Activated B cell treated with CpG ODN at 0.5 μM for 24 hours (primary cell): ENCODE measurements at regions of chr10 and their contacts with region 1.

Region 1: DNA sequence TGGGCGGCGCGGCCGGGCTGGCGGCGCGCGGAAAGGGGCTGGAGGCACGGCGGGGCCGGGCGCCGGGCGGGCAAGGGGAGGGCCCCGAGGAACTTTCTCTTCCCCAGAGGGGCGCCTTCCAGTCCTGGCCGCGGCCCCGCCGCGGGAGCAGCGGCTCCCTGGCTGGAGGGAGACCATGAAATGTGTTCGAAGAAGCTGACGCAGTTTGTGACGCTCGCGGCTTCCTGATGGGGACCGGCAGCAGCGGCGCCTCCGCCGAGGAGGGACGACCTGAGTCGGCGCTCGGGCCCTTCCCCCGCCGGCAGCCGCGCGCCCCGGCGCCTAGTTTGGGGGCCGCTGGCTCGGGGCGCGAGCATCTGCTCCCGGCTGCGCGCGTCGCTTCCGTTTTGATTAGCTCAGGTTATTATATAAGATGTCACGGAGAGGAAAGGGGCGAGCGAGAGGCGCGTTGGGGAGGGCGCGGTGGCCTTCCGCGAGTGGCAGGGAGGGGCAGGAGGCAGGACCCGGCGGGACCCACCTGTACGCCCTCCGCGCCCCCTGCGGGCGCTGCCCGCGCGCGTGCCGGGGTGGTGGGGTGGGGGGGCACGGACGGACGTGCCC is 57.1 kb upstream of the PCGF5 start:
- DNase-seq: peak; percentile 79
- ATAC-seq: peak; percentile 51
- H3K4me3 Mint-ChIP-seq: peak overlapping the region; percentile 90
- H3K27ac Mint-ChIP-seq: peak overlapping the region; percentile 92
- H3K4me1 Mint-ChIP-seq: peaks cover 53% of the 10 kb centered on the region
- H3K27me3 Mint-ChIP-seq: no peaks in the 10 kb centered on the region
- CTCF ChIP-seq: no peak

Region 2: GRCh38 chr10:90912174-90912573 is 251.2 kb before region 1 on chr10:
- CTCF ChIA-PET with region 1: interaction called, 6 read pairs
- POLR2A ChIA-PET with region 1: interaction called, 9 read pairs
- intact Hi-C with region 1: loop called (anchors 2 kb)
- DNase-seq: no peak
- ATAC-seq: no peak
- H3K4me3 Mint-ChIP-seq: no peak overlapping the region
- H3K27ac Mint-ChIP-seq: no peak overlapping the region
- H3K4me1 Mint-ChIP-seq: peaks cover 19% of the 10 kb centered on the region
- H3K27me3 Mint-ChIP-seq: no peaks in the 10 kb centered on the region
- CTCF ChIP-seq: no peak

Region 3: DNA sequence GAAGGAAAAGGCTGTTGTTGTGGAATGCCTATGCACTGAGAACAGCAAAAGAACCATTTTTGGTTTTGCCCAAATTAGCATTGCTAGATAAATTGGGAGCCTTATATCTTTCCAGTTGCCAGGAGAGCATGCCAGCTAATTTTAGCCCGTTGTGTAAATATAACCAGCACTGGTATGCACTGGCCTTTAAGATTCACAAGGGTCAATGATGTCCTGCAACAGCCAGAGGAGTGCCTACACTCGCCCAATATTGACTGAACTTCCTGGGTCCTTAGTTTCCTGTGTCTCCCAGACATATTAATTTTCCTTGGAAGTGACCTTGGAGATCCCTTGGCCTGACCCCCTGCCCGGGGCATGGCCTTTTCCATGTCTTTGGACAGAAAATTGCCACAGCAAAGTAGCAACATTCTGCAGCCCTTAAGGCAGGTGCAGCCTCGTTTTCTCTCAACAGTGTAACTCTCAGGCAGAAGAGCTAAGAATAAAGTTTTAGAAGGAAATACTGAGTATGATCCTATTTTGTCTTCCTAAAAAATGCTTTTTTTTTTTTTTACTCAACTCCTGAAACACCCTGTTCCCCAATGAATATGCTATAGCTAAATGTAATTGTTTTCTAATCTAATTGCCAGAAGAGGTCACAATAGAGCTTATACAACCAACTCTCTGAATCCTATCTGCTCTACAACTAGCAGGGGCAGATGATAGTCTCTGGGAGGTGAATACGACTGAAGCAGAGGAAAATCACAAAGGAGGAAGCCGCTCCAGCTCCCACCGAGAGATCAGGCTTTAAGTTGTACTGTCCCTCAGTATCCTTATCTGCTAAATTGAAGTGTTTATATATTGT is 74.8 kb before region 1 on chr10:
- CTCF ChIA-PET with region 1: interaction called, 4 read pairs
- POLR2A ChIA-PET with region 1: interaction called, 12 read pairs
- intact Hi-C with region 1: loop called (anchors 2 kb)
- DNase-seq: no peak
- ATAC-seq: peak; percentile 69
- H3K4me3 Mint-ChIP-seq: no peak overlapping the region
- H3K27ac Mint-ChIP-seq: no peak overlapping the region
- H3K4me1 Mint-ChIP-seq: peaks cover 6% of the 10 kb centered on the region
- H3K27me3 Mint-ChIP-seq: no peaks in the 10 kb centered on the region
- CTCF ChIP-seq: no peak

Region 4: GRCh38 chr10:91185239-91185875 is 22.0 kb after region 1 on chr10:
- CTCF ChIA-PET with region 1: no interaction called
- POLR2A ChIA-PET with region 1: interaction called, 5 read pairs
- intact Hi-C with region 1: loop called (anchors 2 kb)
- DNase-seq: no peak
- ATAC-seq: no peak
- H3K4me3 Mint-ChIP-seq: no peak overlapping the region
- H3K27ac Mint-ChIP-seq: no peak overlapping the region
- H3K4me1 Mint-ChIP-seq: peaks cover 80% of the 10 kb centered on the region
- H3K27me3 Mint-ChIP-seq: no peaks in the 10 kb centered on the region
- CTCF ChIP-seq: no peak

Region 5: DNA sequence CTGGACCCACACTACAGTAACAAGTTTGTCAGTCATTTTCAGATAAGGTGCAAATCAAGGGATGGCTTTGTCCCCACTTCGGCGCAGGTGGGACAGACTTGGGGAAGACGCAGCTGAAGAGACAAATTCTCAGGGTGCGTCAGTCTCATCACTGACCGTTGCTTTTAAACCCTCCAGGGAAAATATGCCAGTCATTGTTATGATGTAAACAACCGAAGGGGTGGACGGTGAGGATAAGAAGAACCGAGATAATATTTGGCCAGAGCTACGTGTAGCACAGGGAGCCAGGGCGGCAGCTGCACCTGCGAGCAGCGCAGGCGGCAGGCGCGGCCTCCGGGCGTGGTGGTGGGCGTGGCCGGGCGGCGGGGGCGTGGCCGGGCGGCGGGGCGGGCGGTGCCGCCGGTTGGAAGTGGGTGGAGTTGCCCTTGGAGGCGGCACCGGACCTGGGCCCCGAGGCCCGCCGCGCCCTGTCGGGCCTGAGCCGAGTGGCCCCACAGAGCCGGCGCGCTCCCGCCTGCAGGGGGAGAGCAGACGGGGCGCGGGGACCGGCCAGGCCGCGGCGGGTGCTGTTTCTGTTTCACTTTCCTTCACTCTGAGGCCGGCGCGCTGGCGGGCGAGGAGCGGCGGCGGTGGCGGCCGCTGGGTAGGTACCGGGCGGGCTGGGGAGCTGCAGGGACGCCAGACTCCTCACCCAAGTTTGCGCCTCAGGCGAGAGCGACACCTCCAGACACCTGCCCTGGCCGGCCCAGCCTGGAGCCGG is 57.0 kb after region 1 on chr10 and contains the start of gene PCGF5:
- CTCF ChIA-PET with region 1: interaction called, 6 read pairs
- POLR2A ChIA-PET with region 1: interaction called, 53 read pairs
- intact Hi-C with region 1: loop called (anchors 1 kb)
- DNase-seq: peak; percentile 97
- ATAC-seq: peak; percentile 96
- H3K4me3 Mint-ChIP-seq: peak within 1 kb of the TSS; percentile 93
- H3K27ac Mint-ChIP-seq: peak within 1 kb of the TSS; percentile 91
- H3K4me1 Mint-ChIP-seq: peaks cover 68% of the 10 kb centered on the region
- H3K27me3 Mint-ChIP-seq: no peaks in the 10 kb centered on the region
- CTCF ChIP-seq: no peak
- total RNA-seq, gene PCGF5: 70.2 and 72.9 TPM in 2 replicates

Region 6: DNA sequence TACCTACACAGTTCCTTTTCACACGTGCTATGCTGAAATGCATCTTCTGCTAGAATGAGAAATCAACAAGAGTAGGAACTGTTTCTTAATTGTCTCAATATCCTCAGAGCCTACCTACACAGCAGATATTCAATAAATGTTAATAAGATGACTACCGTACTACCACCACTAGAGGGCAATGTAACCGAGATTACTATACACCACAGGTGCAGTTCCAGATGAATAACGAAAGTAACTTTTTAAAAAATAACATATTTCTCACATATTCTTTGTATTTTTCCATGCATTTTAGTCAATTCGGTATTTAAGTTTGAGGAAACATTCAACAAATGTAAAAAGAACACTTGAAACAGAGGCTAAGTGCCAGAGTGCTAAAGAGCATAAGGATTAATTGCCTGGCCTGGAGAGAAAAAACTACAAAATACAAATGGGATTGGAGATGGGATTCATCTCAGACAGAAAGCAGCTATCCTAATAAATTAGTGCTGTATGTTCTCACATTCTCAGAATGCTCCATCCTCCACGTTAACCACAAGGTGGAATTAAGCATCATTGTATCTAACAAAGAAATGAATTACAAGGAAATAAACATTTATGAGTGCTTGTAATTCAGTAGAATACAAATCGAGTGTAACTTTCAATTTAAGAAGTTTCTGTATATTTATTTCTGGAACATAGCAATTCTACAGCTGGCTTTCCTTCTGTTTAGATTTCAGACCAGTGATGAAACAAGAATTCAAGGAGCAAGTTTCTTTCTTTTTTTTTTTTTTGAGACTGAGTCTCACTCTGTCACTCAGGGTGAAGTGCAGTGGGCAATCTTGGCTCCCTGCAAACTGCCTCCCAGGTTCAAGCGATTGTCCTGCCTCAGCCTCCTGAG is 226.5 kb after region 1 on chr10:
- CTCF ChIA-PET with region 1: no interaction called
- POLR2A ChIA-PET with region 1: no interaction called
- intact Hi-C with region 1: no loop called
- DNase-seq: no peak
- ATAC-seq: peak; percentile 91
- H3K4me3 Mint-ChIP-seq: no peak overlapping the region
- H3K27ac Mint-ChIP-seq: no peak overlapping the region
- H3K4me1 Mint-ChIP-seq: peaks cover 3% of the 10 kb centered on the region
- H3K27me3 Mint-ChIP-seq: peaks cover 13% of the 10 kb centered on the region
- CTCF ChIP-seq: peak; percentile 73

Region 7: DNA sequence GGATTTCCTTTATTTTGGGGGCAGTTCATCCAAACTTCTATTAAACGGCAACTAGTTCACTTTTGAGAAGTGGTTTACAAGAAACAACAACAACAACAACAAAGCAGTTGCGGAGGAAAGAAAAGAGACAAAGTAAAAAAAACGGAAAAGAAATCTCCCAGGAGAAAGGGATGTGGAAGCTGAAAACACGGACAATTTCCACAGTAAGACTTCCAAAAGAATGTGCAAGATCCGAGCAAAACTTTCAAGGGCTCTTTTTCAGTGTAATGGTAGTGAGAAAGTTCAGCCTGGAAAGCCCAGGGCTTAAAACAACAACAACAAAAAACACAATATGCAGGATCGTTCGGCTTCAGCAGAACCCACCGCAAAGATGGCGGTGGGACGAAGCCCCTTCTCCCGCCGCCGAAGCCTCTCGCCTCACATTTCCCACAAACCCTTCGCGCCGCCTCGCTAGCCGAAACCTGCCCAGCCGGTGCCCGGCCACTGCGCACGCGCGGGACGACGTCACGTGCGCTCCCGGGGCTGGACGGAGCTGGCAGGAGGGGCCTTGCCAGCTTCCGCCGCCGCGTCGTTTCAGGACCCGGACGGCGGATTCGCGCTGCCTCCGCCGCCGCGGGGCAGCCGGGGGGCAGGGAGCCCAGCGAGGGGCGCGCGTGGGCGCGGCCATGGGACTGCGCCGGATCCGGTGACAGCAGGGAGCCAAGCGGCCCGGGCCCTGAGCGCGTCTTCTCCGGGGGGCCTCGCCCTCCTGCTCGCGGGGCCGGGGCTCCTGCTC is 634.7 kb after region 1 on chr10 and contains the start of gene TNKS2:
- CTCF ChIA-PET with region 1: no interaction called
- POLR2A ChIA-PET with region 1: interaction called, 3 read pairs
- intact Hi-C with region 1: loop called (anchors 5 kb)
- DNase-seq: peak; percentile 96
- ATAC-seq: peak; percentile 70
- H3K4me3 Mint-ChIP-seq: peak within 1 kb of the TSS; percentile 93
- H3K27ac Mint-ChIP-seq: peak within 1 kb of the TSS; percentile 97
- H3K4me1 Mint-ChIP-seq: peaks cover 66% of the 10 kb centered on the region
- H3K27me3 Mint-ChIP-seq: no peaks in the 10 kb centered on the region
- CTCF ChIP-seq: no peak
- total RNA-seq, gene TNKS2: 29.5 and 33.1 TPM in 2 replicates